WTC11 (cell line): ENCODE measurements at regions of chr7 and their contacts with region 1.

Region 1: DNA sequence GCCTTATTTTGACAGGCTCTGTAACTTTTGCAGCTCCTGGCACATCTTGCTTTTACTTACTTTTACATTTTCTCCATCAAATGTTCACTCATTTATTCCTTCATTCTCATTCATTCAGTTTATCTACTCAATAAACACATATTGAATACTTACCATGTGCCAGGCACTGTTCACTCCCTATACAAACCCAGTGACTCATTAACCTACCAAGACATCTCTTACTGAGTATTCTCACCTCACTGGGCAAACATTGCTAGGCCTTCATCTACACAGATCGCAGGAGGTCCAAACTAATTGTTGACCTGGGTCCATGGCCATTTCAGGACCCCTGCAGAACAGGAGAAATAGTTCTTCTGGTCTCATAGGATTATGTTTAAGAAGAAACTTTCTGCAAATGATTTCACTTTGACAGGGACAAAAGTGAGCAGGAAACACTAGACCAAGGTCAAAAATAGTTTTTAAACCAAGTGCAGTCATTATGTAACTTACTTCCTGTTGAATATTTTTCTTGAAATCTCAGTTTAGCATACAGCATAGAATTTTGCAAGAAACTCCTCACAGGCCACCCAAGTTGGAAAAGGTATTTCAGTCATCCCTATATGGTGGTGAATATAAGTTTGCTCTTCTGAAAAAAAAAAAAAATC is 17.6 kb downstream of the SLC26A4 start:
- DNase-seq: no peak
- ATAC-seq: no peak
- H3K4me3 Mint-ChIP-seq: no peak overlapping the region
- H3K27ac Mint-ChIP-seq: peak overlapping the region; percentile 4; the same call in 1 of the 2 replicates
- H3K4me1 Mint-ChIP-seq: peaks cover 11% of the 10 kb centered on the region
- H3K27me3 Mint-ChIP-seq: no peaks in the 10 kb centered on the region
- CTCF ChIP-seq: no peak

Region 2: GRCh38 chr7:107355616-107356015 is 322.6 kb before region 1 on chr7:
- CTCF ChIA-PET with region 1: no interaction called
- POLR2A ChIA-PET with region 1: no interaction called
- DNase-seq: no peak
- ATAC-seq: no peak
- H3K4me3 Mint-ChIP-seq: no peak overlapping the region
- H3K27ac Mint-ChIP-seq: no peak overlapping the region
- H3K4me1 Mint-ChIP-seq: no peaks in the 10 kb centered on the region
- H3K27me3 Mint-ChIP-seq: no peaks in the 10 kb centered on the region
- CTCF ChIP-seq: no peak

Region 3: GRCh38 chr7:107692501-107692900 is 14.3 kb after region 1 on chr7:
- CTCF ChIA-PET with region 1: interaction called, 3 read pairs
- POLR2A ChIA-PET with region 1: interaction called, 12 read pairs
- DNase-seq: no peak
- ATAC-seq: no peak
- H3K4me3 Mint-ChIP-seq: no peak overlapping the region
- H3K27ac Mint-ChIP-seq: no peak overlapping the region
- H3K4me1 Mint-ChIP-seq: peaks cover 50% of the 10 kb centered on the region
- H3K27me3 Mint-ChIP-seq: no peaks in the 10 kb centered on the region
- CTCF ChIP-seq: no peak